Activated CD4-positive, alpha-beta T cell treated with anti-CD3 and anti-CD28 coated beads for 36 hours (primary cell): ENCODE measurements at regions of chr6 and their contacts with region 1.

Region 1: DNA sequence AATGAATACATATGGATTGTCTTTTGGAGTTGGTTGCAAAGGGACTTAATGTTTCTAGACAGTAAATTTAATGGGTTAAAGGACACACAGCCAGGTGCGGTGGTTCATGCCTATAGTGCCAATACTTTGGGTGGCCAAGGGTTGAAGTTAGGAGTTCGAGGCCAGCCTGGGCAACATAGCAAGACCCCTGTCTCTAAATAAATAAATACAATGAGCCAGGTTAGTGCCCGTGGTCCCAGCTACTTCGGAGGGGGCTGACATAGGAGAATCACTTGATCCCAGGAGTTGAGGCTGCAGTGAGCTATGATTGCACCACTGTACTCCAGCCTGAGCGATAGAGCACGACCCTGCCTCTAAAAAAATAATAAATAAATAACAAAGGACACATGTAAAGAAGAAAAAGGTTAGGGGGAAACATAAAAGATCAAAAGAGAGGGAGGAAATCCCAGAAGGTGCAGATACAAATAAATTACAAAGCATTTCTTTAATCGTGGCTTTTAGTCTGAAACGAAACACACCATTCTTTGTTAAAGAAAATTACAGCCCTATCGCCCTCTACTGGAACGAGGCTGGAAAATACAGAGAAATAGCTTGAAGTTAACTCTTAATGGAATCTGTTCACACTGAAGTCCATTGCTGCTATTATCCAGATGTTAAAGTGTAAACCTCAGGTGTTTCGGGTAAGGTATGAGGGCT is 42.6 kb upstream of the SCML4 start:
- DNase-seq: peak; percentile 38
- ATAC-seq: peak; percentile 43
- H3K4me3 Mint-ChIP-seq: no peak overlapping the region
- H3K27ac Mint-ChIP-seq: no peak overlapping the region
- H3K4me1 Mint-ChIP-seq: peaks cover 30% of the 10 kb centered on the region
- H3K27me3 Mint-ChIP-seq: no peaks in the 10 kb centered on the region

Region 2: DNA sequence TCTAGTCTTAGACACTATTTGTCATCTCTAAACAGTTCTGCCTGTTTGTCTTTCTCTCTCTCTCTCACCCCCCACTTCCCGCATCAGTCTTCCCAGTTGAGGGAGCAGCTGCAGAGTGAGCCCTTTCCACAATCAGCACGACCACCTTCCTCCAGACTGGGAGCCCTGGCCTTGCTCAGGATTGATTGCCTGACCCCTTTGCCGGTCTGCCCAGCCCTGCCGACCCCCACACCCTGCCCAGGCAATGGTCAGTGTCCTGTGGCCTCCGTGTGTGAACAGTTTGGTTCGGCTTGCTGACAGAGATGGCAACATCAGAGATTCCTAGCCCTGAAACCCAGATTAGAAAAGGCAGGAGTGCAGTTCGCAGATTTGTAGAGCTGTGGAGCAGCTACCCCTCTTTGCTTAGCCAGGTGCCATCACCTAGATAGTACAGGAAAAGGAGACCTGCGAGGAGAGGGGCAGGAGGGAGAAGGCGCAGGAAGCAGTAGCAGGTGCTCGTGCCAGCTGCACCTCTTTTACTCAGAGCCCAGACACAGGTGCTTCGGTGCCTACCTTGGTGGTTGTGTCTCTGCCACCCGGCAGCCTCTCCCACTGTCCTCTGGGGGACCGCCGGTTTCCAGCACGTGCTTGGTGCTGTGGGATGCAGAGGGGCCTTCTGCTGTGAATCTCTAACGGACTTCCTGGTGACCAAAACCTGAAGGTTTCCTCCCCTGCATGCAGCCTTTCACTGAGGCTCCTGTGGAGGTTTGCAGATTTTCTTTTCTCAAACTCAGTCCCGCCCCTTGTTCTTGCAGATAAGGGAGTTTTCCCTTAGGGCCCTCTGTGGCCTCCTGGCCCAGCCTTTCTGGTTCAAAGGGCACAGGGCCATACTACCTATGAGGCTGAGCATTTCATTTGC is 135.1 kb before region 1 on chr6:
- CTCF ChIA-PET with region 1: interaction called, 17 read pairs
- POLR2A ChIA-PET with region 1: no interaction called
- intact Hi-C with region 1: loop called (anchors 1 to 5 kb)
- DNase-seq: peak; percentile 46
- ATAC-seq: peak; percentile 20
- H3K4me3 Mint-ChIP-seq: peak overlapping the region; percentile 79
- H3K27ac Mint-ChIP-seq: peak overlapping the region; percentile 91
- H3K4me1 Mint-ChIP-seq: peaks cover 82% of the 10 kb centered on the region
- H3K27me3 Mint-ChIP-seq: no peaks in the 10 kb centered on the region

Region 3: DNA sequence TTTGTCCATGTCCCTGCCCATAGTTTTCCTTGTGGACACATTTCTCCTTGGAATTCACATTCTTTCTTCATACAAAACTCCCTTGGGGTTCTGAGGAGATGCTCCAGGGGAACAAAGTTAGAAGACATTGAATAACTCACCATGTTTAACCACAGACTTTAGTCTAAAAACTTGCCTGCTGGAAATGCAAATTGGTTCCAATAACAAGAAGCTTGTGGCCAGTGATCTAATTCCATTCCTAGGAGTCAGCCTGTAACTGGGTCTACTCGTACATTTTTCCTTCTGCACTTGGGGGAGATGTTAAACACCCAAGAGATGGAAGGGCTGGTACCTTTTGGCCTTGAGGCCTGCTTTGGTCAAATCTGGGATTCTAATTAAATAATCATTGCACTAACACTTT is 102.8 kb before region 1 on chr6:
- CTCF ChIA-PET with region 1: interaction called, 3 read pairs
- POLR2A ChIA-PET with region 1: interaction called, 11 read pairs
- intact Hi-C with region 1: no loop called
- DNase-seq: no peak
- ATAC-seq: no peak
- H3K4me3 Mint-ChIP-seq: no peak overlapping the region
- H3K27ac Mint-ChIP-seq: no peak overlapping the region
- H3K4me1 Mint-ChIP-seq: peaks cover 17% of the 10 kb centered on the region
- H3K27me3 Mint-ChIP-seq: no peaks in the 10 kb centered on the region

Region 4: GRCh38 chr6:107794771-107795170 is 72.0 kb before region 1 on chr6:
- CTCF ChIA-PET with region 1: interaction called, 7 read pairs
- POLR2A ChIA-PET with region 1: no interaction called
- intact Hi-C with region 1: loop called in 1 of 2 experiments (anchors 5 kb)
- DNase-seq: no peak
- ATAC-seq: peak; percentile 45
- H3K4me3 Mint-ChIP-seq: no peak overlapping the region
- H3K27ac Mint-ChIP-seq: peak overlapping the region; percentile 63
- H3K4me1 Mint-ChIP-seq: peaks cover 70% of the 10 kb centered on the region
- H3K27me3 Mint-ChIP-seq: no peaks in the 10 kb centered on the region

Region 5: GRCh38 chr6:107894821-107895396 is 28.2 kb after region 1 on chr6:
- CTCF ChIA-PET with region 1: no interaction called
- POLR2A ChIA-PET with region 1: no interaction called
- intact Hi-C with region 1: no loop called
- DNase-seq: no peak
- ATAC-seq: no peak
- H3K4me3 Mint-ChIP-seq: no peak overlapping the region
- H3K27ac Mint-ChIP-seq: no peak overlapping the region
- H3K4me1 Mint-ChIP-seq: no peaks in the 10 kb centered on the region
- H3K27me3 Mint-ChIP-seq: no peaks in the 10 kb centered on the region